ENCODE measurements at regions of chr3 and their contacts with region 1.

Region 1: DNA sequence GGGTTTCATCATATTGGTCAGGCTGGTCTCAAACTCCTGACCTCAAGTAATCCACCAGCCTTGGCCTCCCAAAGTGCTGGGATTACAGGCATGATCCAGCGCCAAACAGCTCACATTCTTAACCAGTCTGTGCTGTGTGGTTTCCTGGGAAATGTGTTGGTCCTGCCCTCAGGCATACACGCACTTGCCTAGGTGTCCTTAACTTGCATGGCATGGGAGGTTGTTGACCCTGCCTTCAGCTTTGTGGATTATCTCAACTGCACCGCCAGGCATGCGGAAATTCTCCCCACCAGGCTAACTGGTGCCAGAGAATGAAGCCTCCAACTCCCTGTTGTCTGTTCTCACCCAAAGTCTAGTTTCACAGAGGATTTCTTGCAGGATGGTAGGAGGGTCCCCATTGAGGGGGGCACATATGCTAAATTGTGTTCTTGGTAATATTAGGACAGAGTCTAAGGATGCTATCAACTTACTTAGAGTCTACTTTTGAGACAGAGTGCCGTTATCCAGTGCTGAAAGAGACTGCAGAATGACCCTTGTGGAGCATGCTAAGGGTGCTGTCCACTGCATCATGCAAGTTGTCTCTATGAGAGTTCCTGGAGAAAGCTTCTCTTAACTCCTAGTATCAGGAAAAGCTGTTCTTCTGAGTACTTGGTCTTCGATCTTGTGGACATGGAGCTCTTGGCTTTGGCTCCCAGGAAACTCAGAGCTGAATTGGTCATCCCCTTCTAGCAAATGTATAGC is 61.6 kb upstream of the EIF1B start:
- DNase-seq: no peak
- ATAC-seq: peak in 2 of 4 donors; percentile 49 to 52
- H3K4me3 ChIP-seq: no peak overlapping the region
- H3K27ac ChIP-seq: peak overlapping the region in 2 of 12 donors; percentile 68 to 79
- H3K4me1 ChIP-seq: peaks cover 0 to 27% (median 1%) of the 10 kb centered on the region in 12 donors
- H3K27me3 ChIP-seq: no peaks in the 10 kb centered on the region
- CTCF ChIP-seq: no peak
- POLR2A ChIP-seq: no peak

Region 2: GRCh38 chr3:40292637-40293349 is 44.9 kb after region 1 on chr3:
- intact Hi-C with region 1: loop called in 3 of 10 experiments (anchors 5 kb)
- DNase-seq: peak in 4 of 5 donors; percentile 50 to 71 (median 58)
- ATAC-seq: peak; percentile 86 to 94 (median 89)
- H3K4me3 ChIP-seq: no peak overlapping the region
- H3K27ac ChIP-seq: peak overlapping the region; percentile 6 to 85 (median 79)
- H3K4me1 ChIP-seq: peaks cover 0 to 38% (median 7%) of the 10 kb centered on the region in 12 donors
- H3K27me3 ChIP-seq: no peaks in the 10 kb centered on the region
- CTCF ChIP-seq: no peak
- POLR2A ChIP-seq: no peak

Region 3: GRCh38 chr3:40387001-40387894 is 139.4 kb after region 1 on chr3 and contains the start of gene ENTPD3:
- intact Hi-C with region 1: no loop called
- DNase-seq: peak in 1 of 5 donors; percentile 62
- ATAC-seq: peak in 3 of 4 donors; percentile 71 to 82 (median 80)
- H3K4me3 ChIP-seq: peak within 1 kb of the TSS in 11 of 12 donors; percentile 19 to 60 (median 48)
- H3K27ac ChIP-seq: no peak within 1 kb of the TSS
- H3K4me1 ChIP-seq: peaks cover 0 to 13% (median 2%) of the 10 kb centered on the region in 12 donors
- H3K27me3 ChIP-seq: peaks cover 0 to 9% (median 0%) of the 10 kb centered on the region in 9 donors
- CTCF ChIP-seq: no peak
- POLR2A ChIP-seq: no peak
- total RNA-seq, gene ENTPD3: 0.12 to 0.83 (median 0.39) TPM

Measured in heart left ventricle (tissue), 16 donors.